ENCODE measurements at regions of chr2 and their contacts with region 1.

Region 1: GRCh38 chr2:109069331-109070194 is 59.4 kb upstream of the SH3RF3 start:
- DNase-seq: peak; percentile 66
- ATAC-seq: peak; percentile 87
- H3K4me3 ChIP-seq: no peak overlapping the region
- H3K27ac ChIP-seq: peak overlapping the region; percentile 77
- H3K4me1 ChIP-seq: peaks cover 59% of the 10 kb centered on the region
- H3K27me3 ChIP-seq: no peaks in the 10 kb centered on the region
- CTCF ChIP-seq: peak; percentile 9; the same call in 1 of the 2 replicates
- EP300 ChIP-seq: peak in 1 of 2 experiments; percentile 75; a peak in 2 of 4 replicates
- POLR2A ChIP-seq: no peak
- RAD21 ChIP-seq: no peak

Region 2: GRCh38 chr2:108492364-108492763 is 577.2 kb before region 1 on chr2:
- CTCF ChIA-PET with region 1: no interaction called
- POLR2A ChIA-PET with region 1: no interaction called
- in situ Hi-C with region 1: no loop called
- intact Hi-C with region 1: no loop called
- DNase-seq: peak; percentile 42
- ATAC-seq: peak; percentile 71
- H3K4me3 ChIP-seq: no peak overlapping the region
- H3K27ac ChIP-seq: no peak overlapping the region
- H3K4me1 ChIP-seq: peaks cover 27% of the 10 kb centered on the region
- H3K27me3 ChIP-seq: no peaks in the 10 kb centered on the region
- CTCF ChIP-seq: no peak
- EP300 ChIP-seq: 0 out of 4 replicates have a peak, but pooled peaks of 1 of the 2 experiments have one; percentile 7
- POLR2A ChIP-seq: no peak
- RAD21 ChIP-seq: no peak

Region 3: GRCh38 chr2:109079590-109079989 is 10.0 kb after region 1 on chr2:
- CTCF ChIA-PET with region 1: no interaction called
- POLR2A ChIA-PET with region 1: no interaction called
- in situ Hi-C with region 1: no loop called
- intact Hi-C with region 1: loop called (anchors 1 kb)
- DNase-seq: no peak
- ATAC-seq: peak; percentile 31; the same call in 2 of the 3 replicates
- H3K4me3 ChIP-seq: no peak overlapping the region
- H3K27ac ChIP-seq: no peak overlapping the region
- H3K4me1 ChIP-seq: no peaks in the 10 kb centered on the region
- H3K27me3 ChIP-seq: 0 out of 5 replicates have a peak, but pooled peaks cover 0 to 3% of the 10 kb centered on the region in 2 experiments
- CTCF ChIP-seq: no peak
- EP300 ChIP-seq: no peak
- POLR2A ChIP-seq: no peak
- RAD21 ChIP-seq: no peak

Measured in HepG2 (cell line).